ENCODE measurements at regions of chr2 and their contacts with region 1.

Region 1: DNA sequence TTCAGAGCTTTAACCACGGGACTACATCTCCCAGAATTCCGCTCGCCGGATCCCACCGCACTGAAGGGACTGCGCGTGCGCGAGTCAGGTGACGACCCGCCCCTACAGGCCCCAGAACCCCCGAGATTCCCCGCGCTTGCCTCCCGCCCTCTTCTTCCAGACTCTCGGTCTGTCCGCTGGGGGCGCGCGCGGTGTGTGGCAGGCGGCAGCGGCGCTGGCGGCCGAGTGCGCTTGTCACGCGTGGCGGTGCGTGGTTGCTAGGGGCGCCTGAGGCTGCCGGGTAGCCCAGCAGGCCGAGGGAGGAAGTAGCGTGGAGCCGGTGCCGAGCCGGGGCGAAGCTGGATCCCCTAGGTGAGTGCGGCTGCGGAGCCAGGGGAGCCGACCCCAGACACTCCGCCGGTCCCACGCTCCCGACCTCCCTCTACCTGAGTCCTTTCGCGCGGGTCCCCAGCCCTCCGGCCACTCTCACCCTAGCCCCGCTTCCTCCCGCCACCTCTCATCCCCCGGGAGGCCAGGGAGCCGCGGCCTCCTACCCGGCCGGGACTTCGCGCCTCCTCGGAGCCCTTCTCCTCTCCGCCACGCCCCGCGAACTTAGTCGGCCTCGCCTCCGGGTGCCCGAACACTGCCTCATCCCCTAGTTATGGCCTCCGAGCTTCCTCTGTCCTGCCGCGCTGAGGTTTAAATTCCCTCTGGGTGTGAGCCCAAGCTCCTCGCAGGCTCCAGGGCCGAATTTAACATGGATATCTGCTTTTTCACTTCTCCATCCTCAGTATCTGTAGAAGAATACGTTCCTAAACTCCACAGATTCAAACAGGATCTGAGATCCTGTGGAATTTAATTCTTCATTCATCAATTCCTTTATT is at the start of gene TTLL4:
- DNase-seq: peak; percentile 95 to 99 (median 98)
- ATAC-seq: peak; percentile 97 to 100 (median 98)
- H3K4me3 ChIP-seq: peak within 1 kb of the TSS; percentile 81 to 98
- H3K4me3 Mint-ChIP-seq: peak within 1 kb of the TSS; percentile 92 to 98 (median 95)
- H3K27ac ChIP-seq: peak within 1 kb of the TSS; percentile 78
- H3K27ac Mint-ChIP-seq: peak within 1 kb of the TSS; percentile 86 to 87
- H3K4me1 ChIP-seq: peaks cover 6 to 21% of the 10 kb centered on the region in 2 experiments
- H3K4me1 Mint-ChIP-seq: peaks cover 19 to 22% (median 21%) of the 10 kb centered on the region in 3 donors
- H3K27me3 ChIP-seq: peaks cover 0 to 6% of the 10 kb centered on the region in 2 experiments
- H3K27me3 Mint-ChIP-seq: peaks cover 5 to 9% of the 10 kb centered on the region in 2 donors
- total RNA-seq, gene TTLL4: 16.9 to 29.6 (median 24.4) TPM

Region 2: DNA sequence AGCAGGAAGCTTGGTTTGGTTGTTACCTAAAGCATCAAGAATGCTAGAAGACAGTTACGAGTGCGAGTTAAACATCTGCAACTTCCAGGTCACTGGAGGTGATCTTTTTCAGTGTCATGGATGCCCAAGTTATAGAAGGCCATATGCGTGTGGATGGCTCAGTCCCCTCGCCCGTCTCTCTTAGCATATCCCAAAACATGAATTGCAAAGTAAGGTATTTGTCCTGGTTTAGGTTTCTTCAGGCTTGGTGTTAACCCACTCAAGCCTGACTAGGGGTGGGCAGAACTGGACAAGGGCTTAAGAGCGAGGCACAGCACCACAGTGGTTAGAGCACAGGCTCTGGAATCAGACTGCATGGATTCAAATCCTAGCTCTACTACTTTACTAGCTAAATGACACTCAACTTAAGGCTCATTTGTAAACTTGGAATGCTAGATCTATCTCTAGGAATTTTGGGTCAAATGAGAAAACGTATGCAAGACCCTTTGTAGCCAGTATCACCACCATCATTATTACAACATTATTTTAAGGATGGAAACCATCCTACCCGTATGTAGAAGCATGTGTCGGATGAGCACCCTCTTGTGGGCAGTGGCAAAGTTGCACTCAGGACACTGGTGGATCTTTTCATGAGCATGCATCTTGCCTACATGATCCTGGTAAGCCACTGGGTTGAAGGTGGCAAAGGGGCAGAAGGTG is 62.7 kb before region 1 on chr2:
- CTCF ChIA-PET with region 1: interaction called, 3 to 11 read pairs
- POLR2A ChIA-PET with region 1: interaction called in 1 of 2 experiments, 3 read pairs
- DNase-seq: peak in 31 of 35 experiments; percentile 8 to 71 (median 40)
- ATAC-seq: peak; percentile 79 to 83 (median 81)
- H3K4me3 ChIP-seq: no peak overlapping the region
- H3K4me3 Mint-ChIP-seq: no peak overlapping the region
- H3K27ac ChIP-seq: no peak overlapping the region
- H3K27ac Mint-ChIP-seq: no peak overlapping the region
- H3K4me1 ChIP-seq: peaks cover 0 to 7% of the 10 kb centered on the region in 2 experiments
- H3K4me1 Mint-ChIP-seq: peaks cover 10 to 14% (median 13%) of the 10 kb centered on the region in 3 donors
- H3K27me3 ChIP-seq: no peaks in the 10 kb centered on the region
- H3K27me3 Mint-ChIP-seq: no peaks in the 10 kb centered on the region

Measured in T-cell (primary cell).